ENCODE measurements at regions of chr1 and their contacts with region 1.

Region 1: DNA sequence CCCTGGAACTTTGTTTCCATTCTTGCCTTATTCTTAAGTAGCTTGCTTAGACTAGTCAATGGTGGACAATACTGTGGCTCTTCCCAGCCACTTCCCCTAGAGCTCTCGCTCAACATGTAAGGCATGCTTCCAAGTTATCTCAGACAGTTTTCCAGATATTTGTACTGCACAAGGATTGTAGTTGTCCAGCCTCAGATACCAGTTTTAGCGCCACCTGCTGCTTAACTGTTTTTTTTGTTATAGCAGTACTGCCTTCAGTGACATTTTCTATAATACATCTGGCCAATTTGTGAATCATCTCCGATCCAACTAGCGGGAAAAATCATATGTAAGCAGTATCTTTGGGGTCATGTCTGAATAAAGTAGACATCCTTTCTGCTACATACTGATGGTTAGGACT is 346.7 kb upstream of the ADGRL4 start:
- DNase-seq: no peak

Region 2: DNA sequence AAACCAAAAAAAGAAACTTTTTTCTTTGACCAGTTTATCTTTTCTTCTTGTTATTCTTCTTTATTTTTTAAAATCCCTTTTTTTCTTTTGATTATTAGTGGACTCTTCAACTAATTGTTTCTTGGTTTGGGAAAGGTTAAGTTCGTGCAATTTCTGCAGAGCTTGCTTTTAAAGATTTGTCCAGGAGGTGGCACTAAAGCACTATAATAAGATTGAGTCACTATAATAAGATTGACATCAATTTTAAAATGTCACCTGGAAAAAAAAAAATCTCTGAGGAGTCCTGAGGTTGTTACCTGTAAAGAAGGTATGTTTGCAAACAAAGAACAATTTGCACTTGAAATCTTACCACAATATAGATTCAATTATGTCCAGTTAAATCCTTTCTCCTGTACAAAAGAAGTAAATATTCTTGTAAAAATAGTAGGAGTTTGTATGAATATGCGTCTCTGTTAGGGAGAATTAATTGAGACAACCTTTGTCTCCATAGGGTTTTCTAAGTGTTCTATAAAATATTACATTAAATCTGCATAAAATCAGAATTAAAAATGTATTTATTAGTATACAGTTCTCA is 513.4 kb before region 1 on chr1:
- intact Hi-C with region 1: loop called (anchors 5 kb)
- DNase-seq: no peak

Measured in cardiac septum (tissue), 1 donor.